ENCODE measurements at regions of chr19 and their contacts with region 1.

Region 1: DNA sequence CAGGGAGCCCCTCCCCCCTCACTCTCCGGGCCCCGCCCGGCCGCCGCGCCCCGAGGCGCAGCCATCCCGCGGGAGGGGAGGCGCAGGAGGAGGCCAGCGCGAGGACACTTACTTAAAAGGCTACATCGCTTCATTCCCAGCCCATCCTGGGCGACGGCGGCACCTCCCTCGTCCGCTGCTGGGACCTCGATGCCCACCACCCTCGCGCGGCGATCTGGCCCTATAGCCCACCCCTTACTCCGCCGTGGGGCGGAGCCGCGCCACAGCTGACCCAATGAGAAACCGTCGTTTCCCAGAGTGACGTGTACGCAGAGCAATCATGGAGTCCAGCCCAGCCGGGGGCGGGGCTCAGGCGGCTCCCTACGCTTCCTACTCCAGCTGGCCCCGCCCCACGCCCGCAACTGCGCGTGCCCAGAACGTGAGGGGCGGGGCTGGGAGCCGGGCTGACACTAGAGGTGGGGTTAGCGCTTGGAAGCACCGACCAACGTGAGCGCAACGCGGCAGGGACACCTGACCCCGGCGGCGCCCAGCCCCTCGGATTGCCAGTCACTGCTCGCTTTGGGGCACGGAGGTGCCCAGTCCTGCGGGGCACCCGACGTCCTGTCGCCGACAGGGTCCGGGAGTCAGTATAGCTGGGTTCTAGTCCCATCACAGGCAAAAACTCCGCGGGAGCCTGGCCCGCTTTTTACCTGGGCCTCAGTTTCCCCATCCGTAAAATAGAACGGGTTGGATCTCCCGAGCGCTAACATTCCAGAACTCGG is at the start of gene ANKRD27:
- DNase-seq: peak; percentile 99
- ATAC-seq: peak; percentile 95
- H3K4me3 ChIP-seq: peak within 1 kb of the TSS; percentile 48 to 90 (median 70)
- H3K4me3 Mint-ChIP-seq: peak within 1 kb of the TSS; percentile 95
- H3K27ac ChIP-seq: peak within 1 kb of the TSS in 1 of 2 donors; percentile 45
- H3K27ac Mint-ChIP-seq: peak within 1 kb of the TSS; percentile 92
- H3K4me1 ChIP-seq: peaks cover 25 to 34% of the 10 kb centered on the region in 2 donors
- H3K4me1 Mint-ChIP-seq: peaks cover 38% of the 10 kb centered on the region
- H3K27me3 ChIP-seq: peaks cover 0 to 30% (median 9%) of the 10 kb centered on the region in 4 experiments
- H3K27me3 Mint-ChIP-seq: peaks cover 8% of the 10 kb centered on the region
- CTCF ChIP-seq: no peak
- total RNA-seq, gene ANKRD27: 43.8 and 45.6 TPM in 2 replicates

Region 2: GRCh38 chr19:32345261-32346207 is 329.6 kb before region 1 on chr19 and contains the start of gene ZNF507:
- CTCF ChIA-PET with region 1: no interaction called
- POLR2A ChIA-PET with region 1: no interaction called
- intact Hi-C with region 1: loop called (anchors 1 kb)
- DNase-seq: peak; percentile 91
- ATAC-seq: peak; percentile 90
- H3K4me3 ChIP-seq: peak within 1 kb of the TSS; percentile 83 to 97 (median 93)
- H3K4me3 Mint-ChIP-seq: peak within 1 kb of the TSS; percentile 97
- H3K27ac ChIP-seq: peak within 1 kb of the TSS; percentile 69 to 88
- H3K27ac Mint-ChIP-seq: peak within 1 kb of the TSS; percentile 94
- H3K4me1 ChIP-seq: peaks cover 23 to 28% of the 10 kb centered on the region in 2 donors
- H3K4me1 Mint-ChIP-seq: peaks cover 27% of the 10 kb centered on the region
- H3K27me3 ChIP-seq: peaks cover 0 to 6% (median 0%) of the 10 kb centered on the region in 4 experiments
- H3K27me3 Mint-ChIP-seq: no peaks in the 10 kb centered on the region
- CTCF ChIP-seq: no peak
- total RNA-seq, gene ZNF507: 38.6 and 40.5 TPM in 2 replicates

Region 3: DNA sequence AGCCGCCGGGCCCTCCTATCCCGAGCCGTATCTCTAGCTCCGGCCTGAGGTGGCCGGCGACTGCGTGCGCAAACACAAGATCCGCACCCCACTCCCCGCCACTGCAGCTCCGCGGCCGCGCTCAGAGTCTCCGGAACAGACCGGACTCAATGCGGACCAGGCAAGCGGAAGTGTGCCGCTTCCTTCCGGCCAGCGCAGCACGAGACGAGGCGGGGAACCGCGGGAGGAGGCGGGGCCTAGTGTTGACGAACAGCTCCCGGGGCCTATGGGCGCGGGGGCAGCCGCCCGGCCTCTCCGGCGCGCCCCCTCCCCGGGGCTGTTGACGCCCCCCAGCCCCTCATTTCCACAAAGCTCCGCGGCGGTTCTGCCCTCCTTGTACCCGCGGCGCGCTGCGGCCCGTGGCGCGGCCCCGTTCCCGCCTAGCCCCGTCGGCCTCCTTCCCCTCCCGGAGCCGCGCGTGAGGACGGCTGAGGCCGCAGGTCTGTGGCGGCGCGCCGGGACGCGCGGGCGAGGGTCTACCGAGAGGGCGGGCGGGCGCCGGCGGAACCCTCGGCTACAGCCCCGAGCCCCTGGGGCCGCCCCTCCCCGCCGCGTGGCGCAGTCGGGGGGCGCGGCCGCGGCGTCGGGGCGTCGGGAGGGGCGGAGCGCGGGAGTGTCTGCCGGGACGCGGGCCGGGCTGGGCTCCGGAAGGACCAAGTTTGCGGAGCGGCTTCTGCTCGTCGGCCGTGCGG is 269.5 kb before region 1 on chr19 and contains the start of gene DPY19L3:
- CTCF ChIA-PET with region 1: no interaction called
- POLR2A ChIA-PET with region 1: interaction called, 4 read pairs
- intact Hi-C with region 1: loop called (anchors 2 kb)
- DNase-seq: peak; percentile 93
- ATAC-seq: peak; percentile 89
- H3K4me3 ChIP-seq: peak within 1 kb of the TSS; percentile 66 to 89 (median 80)
- H3K4me3 Mint-ChIP-seq: peak within 1 kb of the TSS; percentile 92
- H3K27ac ChIP-seq: peak within 1 kb of the TSS; percentile 74 to 93
- H3K27ac Mint-ChIP-seq: peak within 1 kb of the TSS; percentile 94
- H3K4me1 ChIP-seq: peaks cover 11 to 19% of the 10 kb centered on the region in 2 donors
- H3K4me1 Mint-ChIP-seq: peaks cover 15% of the 10 kb centered on the region
- H3K27me3 ChIP-seq: no peaks in the 10 kb centered on the region
- H3K27me3 Mint-ChIP-seq: no peaks in the 10 kb centered on the region
- CTCF ChIP-seq: no peak
- total RNA-seq, gene DPY19L3: 33.3 and 40.0 TPM in 2 replicates

Region 4: GRCh38 chr19:32580901-32581703 is 94.0 kb before region 1 on chr19 and contains the start of gene PDCD5:
- CTCF ChIA-PET with region 1: no interaction called
- POLR2A ChIA-PET with region 1: no interaction called
- intact Hi-C with region 1: loop called (anchors 1 kb)
- DNase-seq: peak; percentile 96
- ATAC-seq: peak; percentile 94
- H3K4me3 ChIP-seq: peak within 1 kb of the TSS; percentile 51 to 85 (median 73)
- H3K4me3 Mint-ChIP-seq: peak within 1 kb of the TSS; percentile 96
- H3K27ac ChIP-seq: peak within 1 kb of the TSS in 1 of 2 donors; percentile 78
- H3K27ac Mint-ChIP-seq: peak within 1 kb of the TSS; percentile 95
- H3K4me1 ChIP-seq: peaks cover 13 to 19% of the 10 kb centered on the region in 2 donors
- H3K4me1 Mint-ChIP-seq: peaks cover 18% of the 10 kb centered on the region
- H3K27me3 ChIP-seq: no peaks in the 10 kb centered on the region
- H3K27me3 Mint-ChIP-seq: peaks cover 4% of the 10 kb centered on the region
- CTCF ChIP-seq: no peak
- total RNA-seq, gene PDCD5: 39.5 and 43.2 TPM in 2 replicates

Region 5: GRCh38 chr19:32619051-32619682 is 56.0 kb before region 1 on chr19:
- CTCF ChIA-PET with region 1: no interaction called
- POLR2A ChIA-PET with region 1: interaction called, 11 read pairs
- intact Hi-C with region 1: no loop called
- DNase-seq: no peak
- ATAC-seq: no peak
- H3K4me3 ChIP-seq: no peak overlapping the region
- H3K4me3 Mint-ChIP-seq: no peak overlapping the region
- H3K27ac ChIP-seq: no peak overlapping the region
- H3K27ac Mint-ChIP-seq: no peak overlapping the region
- H3K4me1 ChIP-seq: no peaks in the 10 kb centered on the region
- H3K4me1 Mint-ChIP-seq: no peaks in the 10 kb centered on the region
- H3K27me3 ChIP-seq: no peaks in the 10 kb centered on the region
- H3K27me3 Mint-ChIP-seq: no peaks in the 10 kb centered on the region
- CTCF ChIP-seq: no peak

Region 6: GRCh38 chr19:32662186-32662585 is 13.0 kb before region 1 on chr19:
- CTCF ChIA-PET with region 1: no interaction called
- POLR2A ChIA-PET with region 1: no interaction called
- intact Hi-C with region 1: no loop called
- DNase-seq: peak; percentile 39
- ATAC-seq: no peak
- H3K4me3 ChIP-seq: no peak overlapping the region
- H3K4me3 Mint-ChIP-seq: no peak overlapping the region
- H3K27ac ChIP-seq: no peak overlapping the region
- H3K27ac Mint-ChIP-seq: no peak overlapping the region
- H3K4me1 ChIP-seq: peaks cover 0 to 10% of the 10 kb centered on the region in 2 donors
- H3K4me1 Mint-ChIP-seq: peaks cover 9% of the 10 kb centered on the region
- H3K27me3 ChIP-seq: no peaks in the 10 kb centered on the region
- H3K27me3 Mint-ChIP-seq: no peaks in the 10 kb centered on the region
- CTCF ChIP-seq: no peak

Region 7: GRCh38 chr19:32691291-32691951 is 16.3 kb after region 1 on chr19 and contains the start of gene NUDT19:
- CTCF ChIA-PET with region 1: interaction called, 7 read pairs
- POLR2A ChIA-PET with region 1: interaction called, 16 read pairs
- intact Hi-C with region 1: loop called (anchors 1 kb)
- DNase-seq: peak; percentile 82
- ATAC-seq: peak; percentile 92
- H3K4me3 ChIP-seq: peak within 1 kb of the TSS; percentile 8 to 77 (median 66)
- H3K4me3 Mint-ChIP-seq: peak within 1 kb of the TSS; percentile 91
- H3K27ac ChIP-seq: peak within 1 kb of the TSS; percentile 37 to 70
- H3K27ac Mint-ChIP-seq: peak within 1 kb of the TSS; percentile 88
- H3K4me1 ChIP-seq: peaks cover 19 to 31% of the 10 kb centered on the region in 2 donors
- H3K4me1 Mint-ChIP-seq: peaks cover 45% of the 10 kb centered on the region
- H3K27me3 ChIP-seq: no peaks in the 10 kb centered on the region
- H3K27me3 Mint-ChIP-seq: no peaks in the 10 kb centered on the region
- CTCF ChIP-seq: no peak
- total RNA-seq, gene NUDT19: 7.1 and 8.9 TPM in 2 replicates

Region 8: GRCh38 chr19:32702075-32702474 is 26.9 kb after region 1 on chr19:
- CTCF ChIA-PET with region 1: no interaction called
- POLR2A ChIA-PET with region 1: no interaction called
- intact Hi-C with region 1: no loop called
- DNase-seq: no peak
- ATAC-seq: no peak
- H3K4me3 ChIP-seq: no peak overlapping the region
- H3K4me3 Mint-ChIP-seq: no peak overlapping the region
- H3K27ac ChIP-seq: no peak overlapping the region
- H3K27ac Mint-ChIP-seq: no peak overlapping the region
- H3K4me1 ChIP-seq: no peaks in the 10 kb centered on the region
- H3K4me1 Mint-ChIP-seq: peaks cover 5% of the 10 kb centered on the region
- H3K27me3 ChIP-seq: no peaks in the 10 kb centered on the region
- H3K27me3 Mint-ChIP-seq: no peaks in the 10 kb centered on the region
- CTCF ChIP-seq: no peak

Region 9: DNA sequence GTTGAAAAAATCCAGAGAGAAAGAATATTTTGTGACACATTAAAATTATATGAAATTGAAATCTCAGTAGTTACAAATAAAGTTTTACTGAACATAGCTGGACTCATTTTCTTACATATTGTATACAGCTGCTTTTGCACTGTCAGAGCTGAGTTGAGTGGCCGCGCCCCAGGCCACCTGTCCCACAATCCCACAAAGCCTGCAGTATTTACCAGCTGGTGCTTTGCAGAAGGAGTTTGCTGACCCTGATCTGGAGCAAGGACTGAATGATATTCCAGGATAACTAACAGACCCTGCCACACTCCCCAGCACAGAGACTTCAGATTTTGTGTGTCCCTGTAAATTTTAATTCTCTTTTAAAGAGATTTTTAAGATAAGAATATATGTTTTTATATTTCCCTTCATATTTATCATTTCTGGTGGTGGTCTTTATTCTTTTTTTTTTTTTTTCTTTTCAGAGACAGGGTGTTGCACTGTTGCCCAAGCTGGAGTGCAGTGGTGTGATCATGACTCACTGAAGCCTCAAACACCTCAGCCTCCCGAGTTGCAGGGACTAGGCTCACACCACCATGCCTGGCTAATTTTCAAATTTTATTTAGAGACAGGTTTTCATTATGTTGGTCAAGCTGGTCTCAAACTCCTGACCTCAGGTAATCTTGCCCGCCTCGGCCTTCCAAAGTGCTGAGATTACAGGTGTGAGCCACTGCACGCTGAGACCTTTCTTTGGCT is 93.0 kb after region 1 on chr19:
- CTCF ChIA-PET with region 1: no interaction called
- POLR2A ChIA-PET with region 1: no interaction called
- intact Hi-C with region 1: no loop called
- DNase-seq: no peak
- ATAC-seq: no peak
- H3K4me3 ChIP-seq: no peak overlapping the region
- H3K4me3 Mint-ChIP-seq: no peak overlapping the region
- H3K27ac ChIP-seq: no peak overlapping the region
- H3K27ac Mint-ChIP-seq: no peak overlapping the region
- H3K4me1 ChIP-seq: no peaks in the 10 kb centered on the region
- H3K4me1 Mint-ChIP-seq: no peaks in the 10 kb centered on the region
- H3K27me3 ChIP-seq: no peaks in the 10 kb centered on the region
- H3K27me3 Mint-ChIP-seq: peaks cover 8% of the 10 kb centered on the region
- CTCF ChIP-seq: no peak

Region 10: DNA sequence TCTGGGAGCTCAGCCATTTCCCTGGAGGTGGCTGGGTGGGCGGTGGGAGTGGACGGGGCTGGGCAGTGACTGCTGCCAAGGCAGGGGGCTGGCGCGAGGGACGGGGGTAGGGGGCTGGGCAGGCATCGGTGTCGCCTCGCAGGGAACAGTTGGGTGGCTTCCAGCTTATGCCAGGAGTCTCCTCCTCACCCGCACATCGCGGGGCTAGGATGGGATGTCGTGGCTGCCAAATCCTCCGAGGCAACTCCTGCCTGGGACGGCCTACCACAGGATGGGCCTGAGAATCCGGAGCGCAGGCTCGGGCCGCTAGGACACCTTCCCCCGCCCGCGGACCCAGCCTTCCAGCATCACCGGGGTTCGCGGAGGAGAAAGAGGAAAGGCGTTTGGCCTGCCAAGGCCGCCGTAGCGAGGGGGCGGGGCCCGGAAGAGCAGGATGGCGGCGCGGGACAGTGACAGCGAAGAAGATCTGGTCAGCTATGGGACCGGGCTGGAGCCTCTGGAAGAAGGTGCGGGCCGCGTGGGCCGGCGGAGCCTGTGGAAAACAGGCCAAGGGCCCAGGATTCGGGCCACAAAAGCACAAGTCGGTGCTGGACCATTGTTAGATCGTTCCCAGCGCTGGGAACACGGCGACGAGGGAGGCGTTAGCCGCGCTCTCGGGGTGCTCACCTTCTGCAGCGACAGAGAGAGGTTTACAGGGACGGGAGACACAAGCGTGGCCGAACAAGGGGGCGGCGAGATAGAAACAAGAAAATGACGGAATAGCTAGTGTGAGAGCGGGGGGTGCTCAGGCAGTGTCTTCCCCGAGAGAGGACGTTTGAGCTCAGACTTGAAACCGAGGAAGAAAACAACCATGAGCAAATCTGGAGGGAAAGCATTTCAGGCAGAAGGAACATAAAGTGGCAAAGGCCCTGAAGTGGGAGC is 405.9 kb after region 1 on chr19 and contains the start of gene GPATCH1:
- CTCF ChIA-PET with region 1: no interaction called
- POLR2A ChIA-PET with region 1: no interaction called
- intact Hi-C with region 1: loop called (anchors 10 kb)
- DNase-seq: peak; percentile 89
- ATAC-seq: peak; percentile 97
- H3K4me3 ChIP-seq: peak within 1 kb of the TSS; percentile 75 to 98 (median 90)
- H3K4me3 Mint-ChIP-seq: peak within 1 kb of the TSS; percentile 93
- H3K27ac ChIP-seq: peak within 1 kb of the TSS; percentile 62 to 85
- H3K27ac Mint-ChIP-seq: peak within 1 kb of the TSS; percentile 93
- H3K4me1 ChIP-seq: peaks cover 9 to 15% of the 10 kb centered on the region in 2 donors
- H3K4me1 Mint-ChIP-seq: peaks cover 19% of the 10 kb centered on the region
- H3K27me3 ChIP-seq: no peaks in the 10 kb centered on the region
- H3K27me3 Mint-ChIP-seq: no peaks in the 10 kb centered on the region
- CTCF ChIP-seq: no peak
- total RNA-seq, gene GPATCH1: 14.6 and 16.9 TPM in 2 replicates